A549 (cell line): ENCODE measurements at regions of chr20 and their contacts with region 1.

Region 1: GRCh38 chr20:39070484-39071231 is 108.5 kb downstream of the DHX35 start:
- DNase-seq: no peak
- ATAC-seq: peak; percentile 11 to 45; a peak in 2 of 6 replicates
- H3K4me3 ChIP-seq: no peak overlapping the region
- H3K27ac ChIP-seq: no peak overlapping the region
- H3K4me1 ChIP-seq: no peaks in the 10 kb centered on the region
- CTCF ChIP-seq: no peak
- EP300 ChIP-seq: no peak
- POLR2A ChIP-seq: no peak
- RAD21 ChIP-seq: no peak

Region 2: DNA sequence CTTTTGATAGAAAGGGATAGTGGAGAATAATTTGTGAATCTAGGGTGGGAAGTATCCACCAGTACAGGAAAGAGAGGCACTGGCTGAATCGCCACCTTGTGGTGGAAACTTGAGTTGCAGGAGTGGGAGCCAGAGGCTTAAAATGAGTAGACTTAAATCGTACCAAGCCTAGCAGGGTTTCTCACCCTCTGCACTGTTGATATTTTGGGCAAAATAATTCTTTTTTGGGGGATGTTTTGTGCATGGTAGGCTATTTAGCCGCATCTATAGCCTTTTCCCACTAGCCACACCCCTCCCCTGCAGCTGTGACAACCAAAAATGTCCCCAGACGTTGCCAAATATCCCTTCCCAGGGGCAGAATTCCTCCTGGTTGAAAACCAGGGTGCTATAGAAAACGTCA is 10.6 kb after region 1 on chr20:
- CTCF ChIA-PET with region 1: interaction called, 76 read pairs
- POLR2A ChIA-PET with region 1: no interaction called
- DNase-seq: peak; percentile 72 to 84
- ATAC-seq: peak; percentile 91 to 96
- H3K4me3 ChIP-seq: no peak overlapping the region
- H3K27ac ChIP-seq: no peak overlapping the region
- H3K4me1 ChIP-seq: no peaks in the 10 kb centered on the region
- CTCF ChIP-seq: peak; percentile 69
- EP300 ChIP-seq: no peak
- POLR2A ChIP-seq: no peak
- RAD21 ChIP-seq: peak; percentile 39 to 50; a peak in 3 of 5 replicates